Heart right ventricle (tissue), 16 donors: ENCODE measurements at regions of chr14 and their contacts with region 1.

Region 1: DNA sequence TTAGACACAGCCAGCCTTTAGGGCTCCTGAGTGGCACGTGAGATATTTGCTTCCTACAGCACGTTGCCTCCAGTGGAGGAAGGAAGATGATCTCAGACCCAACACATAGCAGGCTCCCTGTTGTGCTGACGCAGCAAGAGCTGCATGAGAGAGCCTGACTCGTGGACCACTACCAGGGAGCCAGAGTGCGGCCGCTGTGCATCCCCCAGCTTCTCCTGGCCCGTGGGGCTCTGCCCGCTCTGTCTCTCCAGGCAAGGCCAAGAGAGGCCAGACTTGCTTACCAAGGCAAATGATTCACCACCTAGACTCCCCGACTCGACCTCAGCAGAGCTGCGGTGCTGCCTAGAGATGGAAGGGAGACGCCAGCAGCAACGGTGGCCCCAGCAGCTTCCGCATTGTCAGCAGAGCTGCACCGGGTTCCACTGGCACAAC is 37.5 kb downstream of the MAP3K9 start:
- DNase-seq: no peak
- ATAC-seq: no peak
- H3K4me3 ChIP-seq: no peak overlapping the region
- H3K27ac ChIP-seq: no peak overlapping the region
- H3K4me1 ChIP-seq: no peaks in the 10 kb centered on the region
- H3K27me3 ChIP-seq: no peaks in the 10 kb centered on the region
- CTCF ChIP-seq: no peak

Region 2: DNA sequence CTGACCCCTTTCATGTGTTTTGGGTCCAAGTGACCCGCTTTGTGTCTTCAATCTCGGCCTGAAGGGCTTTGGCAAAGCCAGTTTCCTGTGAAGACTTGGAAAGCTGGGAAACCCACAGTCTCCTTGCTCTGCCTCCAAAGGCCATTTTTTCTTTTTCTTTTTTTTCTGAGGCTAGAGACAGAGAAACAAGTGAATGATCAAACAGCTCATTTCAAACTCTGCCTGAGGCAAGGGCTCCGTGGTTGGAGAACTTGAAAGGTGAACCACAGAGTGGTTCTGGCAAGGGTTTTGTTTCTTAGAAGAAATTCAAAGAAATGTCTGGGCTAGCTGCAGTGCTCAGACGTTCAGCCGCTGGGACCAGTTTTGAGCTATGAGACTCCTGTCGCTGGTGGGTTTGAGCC is 1436.4 kb before region 1 on chr14:
- intact Hi-C with region 1: loop called in 1 of 10 experiments (anchors 5 kb)
- DNase-seq: no peak
- ATAC-seq: no peak
- H3K4me3 ChIP-seq: no peak overlapping the region
- H3K27ac ChIP-seq: no peak overlapping the region
- H3K4me1 ChIP-seq: peaks cover 0 to 4% (median 0%) of the 10 kb centered on the region in 9 donors
- H3K27me3 ChIP-seq: no peaks in the 10 kb centered on the region
- CTCF ChIP-seq: no peak

Region 3: GRCh38 chr14:70934502-70935134 is 162.8 kb after region 1 on chr14:
- intact Hi-C with region 1: no loop called
- DNase-seq: no peak
- ATAC-seq: peak in 6 of 8 donors; percentile 37 to 73 (median 42)
- H3K4me3 ChIP-seq: no peak overlapping the region
- H3K27ac ChIP-seq: peak overlapping the region in 2 of 10 donors; percentile 9 to 70
- H3K4me1 ChIP-seq: peaks cover 3 to 55% (median 42%) of the 10 kb centered on the region in 9 donors
- H3K27me3 ChIP-seq: no peaks in the 10 kb centered on the region
- CTCF ChIP-seq: no peak